ENCODE measurements at regions of chr2 and their contacts with region 1.

Region 1: GRCh38 chr2:42086500-42086953 is 38.7 kb downstream of the PKDCC start:
- DNase-seq: peak in 4 of 9 experiments; percentile 27 to 74 (median 48)
- ATAC-seq: peak; percentile 78
- H3K4me3 ChIP-seq: no peak overlapping the region
- H3K4me3 Mint-ChIP-seq: no peak overlapping the region
- H3K27ac ChIP-seq: no peak overlapping the region
- H3K27ac Mint-ChIP-seq: no peak overlapping the region
- H3K4me1 ChIP-seq: no peaks in the 10 kb centered on the region
- H3K4me1 Mint-ChIP-seq: peaks cover 8% of the 10 kb centered on the region
- H3K27me3 ChIP-seq: no peaks in the 10 kb centered on the region
- H3K27me3 Mint-ChIP-seq: peaks cover 3% of the 10 kb centered on the region
- CTCF ChIP-seq: peak; percentile 62

Region 2: GRCh38 chr2:41853427-41854216 is 232.9 kb before region 1 on chr2:
- CTCF ChIA-PET with region 1: interaction called, 73 read pairs
- POLR2A ChIA-PET with region 1: no interaction called
- intact Hi-C with region 1: no loop called
- DNase-seq: peak in 3 of 9 experiments; percentile 15 to 40 (median 29)
- ATAC-seq: no peak
- H3K4me3 ChIP-seq: no peak overlapping the region
- H3K4me3 Mint-ChIP-seq: no peak overlapping the region
- H3K27ac ChIP-seq: no peak overlapping the region
- H3K27ac Mint-ChIP-seq: no peak overlapping the region
- H3K4me1 ChIP-seq: no peaks in the 10 kb centered on the region
- H3K4me1 Mint-ChIP-seq: no peaks in the 10 kb centered on the region
- H3K27me3 ChIP-seq: peaks cover 0 to 4% of the 10 kb centered on the region in 2 experiments
- H3K27me3 Mint-ChIP-seq: peaks cover 24% of the 10 kb centered on the region
- CTCF ChIP-seq: peak; percentile 31